AG04449 (cell line): ENCODE measurements at regions of chr12 and their contacts with region 1.

Region 1: GRCh38 chr12:118044075-118044474 is 16.9 kb downstream of the WSB2 start:
- DNase-seq: no peak
- H3K4me3 ChIP-seq: no peak overlapping the region
- CTCF ChIP-seq: no peak

Region 2: GRCh38 chr12:118055144-118055557 is 11.1 kb after region 1 on chr12:
- CTCF ChIA-PET with region 1: interaction called, 10 read pairs
- POLR2A ChIA-PET with region 1: no interaction called
- DNase-seq: no peak
- H3K4me3 ChIP-seq: no peak overlapping the region
- CTCF ChIP-seq: peak; percentile 34